Activated CD4-positive, alpha-beta memory T cell treated with anti-CD3 and anti-CD28 coated beads for 36 hours (primary cell): ENCODE measurements at regions of chr1 and their contacts with region 1.

Region 1: GRCh38 chr1:23577056-23578004 is 18.0 kb upstream of the ID3 start:
- DNase-seq: peak; percentile 71
- H3K4me3 Mint-ChIP-seq: peak overlapping the region; percentile 4
- H3K27ac Mint-ChIP-seq: peak overlapping the region; percentile 55
- H3K4me1 Mint-ChIP-seq: peaks cover 27% of the 10 kb centered on the region
- H3K27me3 Mint-ChIP-seq: no peaks in the 10 kb centered on the region

Region 2: DNA sequence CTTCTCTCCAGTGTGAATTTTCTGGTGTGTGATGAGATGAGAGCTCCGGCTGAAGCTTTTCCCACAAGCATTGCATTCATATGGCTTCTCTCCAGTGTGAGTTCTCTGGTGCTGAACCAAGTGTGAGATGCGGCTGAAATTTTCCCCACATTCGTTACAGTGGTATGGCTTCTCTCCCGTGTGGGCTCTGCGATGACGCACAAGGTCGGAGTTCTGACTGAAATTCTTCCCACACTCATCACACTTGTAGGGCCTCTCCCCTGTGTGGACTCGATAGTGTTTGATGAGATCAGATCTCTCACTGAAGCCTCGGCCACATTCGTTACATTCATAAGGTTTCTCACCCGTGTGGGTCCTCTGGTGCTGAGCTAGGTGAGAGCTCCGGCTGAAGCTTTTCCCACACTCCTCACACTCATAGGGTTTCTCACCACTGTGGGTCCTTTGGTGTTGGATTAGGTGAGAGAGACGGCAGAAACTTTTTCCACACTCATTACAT is 215.1 kb before region 1 on chr1:
- CTCF ChIA-PET with region 1: no interaction called
- POLR2A ChIA-PET with region 1: no interaction called
- intact Hi-C with region 1: no loop called
- DNase-seq: peak; percentile 9
- H3K4me3 Mint-ChIP-seq: no peak overlapping the region
- H3K27ac Mint-ChIP-seq: no peak overlapping the region
- H3K4me1 Mint-ChIP-seq: peaks cover 14% of the 10 kb centered on the region
- H3K27me3 Mint-ChIP-seq: no peaks in the 10 kb centered on the region

Region 3: DNA sequence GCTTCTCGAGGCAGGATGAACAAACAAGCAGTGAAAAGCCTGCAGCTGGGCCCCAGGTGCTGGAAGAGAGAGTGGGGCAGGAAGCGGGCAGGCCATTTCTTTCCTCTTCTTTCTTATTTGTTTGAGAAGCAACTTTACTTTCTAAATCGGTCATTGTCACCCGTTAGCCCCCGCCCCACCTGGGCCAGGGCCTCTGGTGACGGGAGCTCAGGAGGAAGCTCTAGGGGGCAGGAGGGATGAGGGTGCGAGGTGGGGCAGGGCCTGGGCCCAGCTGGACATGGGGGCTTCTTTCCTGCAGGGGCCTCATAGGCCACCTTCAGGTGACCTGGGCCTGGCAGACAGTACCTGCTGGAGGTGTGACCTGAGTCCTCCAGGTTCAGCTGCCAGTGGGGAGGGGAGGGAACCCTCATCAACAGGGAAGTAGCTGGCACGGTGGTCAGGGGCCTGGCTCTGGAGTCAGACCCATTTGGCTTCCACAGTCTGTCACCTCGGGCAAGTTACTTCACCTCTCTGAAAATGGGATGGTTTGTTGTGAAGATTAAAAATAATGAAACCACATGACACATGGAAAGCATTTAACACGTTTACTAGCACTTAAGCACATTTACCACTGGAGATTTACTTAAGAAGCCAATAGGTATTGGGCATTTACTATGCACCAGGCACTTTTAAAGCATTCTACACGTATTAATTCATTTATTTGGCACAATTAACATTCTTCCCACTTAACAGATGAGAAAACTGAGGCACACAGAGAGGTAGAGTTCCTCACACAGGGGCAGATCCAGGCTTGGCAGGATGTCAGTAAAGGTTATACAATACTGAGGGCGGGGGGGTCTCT is 36.1 kb after region 1 on chr1:
- CTCF ChIA-PET with region 1: no interaction called
- POLR2A ChIA-PET with region 1: interaction called, 3 read pairs
- intact Hi-C with region 1: loop called (anchors 1 kb)
- DNase-seq: peak; percentile 86
- H3K4me3 Mint-ChIP-seq: peak overlapping the region; percentile 17
- H3K27ac Mint-ChIP-seq: peak overlapping the region; percentile 77
- H3K4me1 Mint-ChIP-seq: peaks cover 72% of the 10 kb centered on the region
- H3K27me3 Mint-ChIP-seq: no peaks in the 10 kb centered on the region

Region 4: DNA sequence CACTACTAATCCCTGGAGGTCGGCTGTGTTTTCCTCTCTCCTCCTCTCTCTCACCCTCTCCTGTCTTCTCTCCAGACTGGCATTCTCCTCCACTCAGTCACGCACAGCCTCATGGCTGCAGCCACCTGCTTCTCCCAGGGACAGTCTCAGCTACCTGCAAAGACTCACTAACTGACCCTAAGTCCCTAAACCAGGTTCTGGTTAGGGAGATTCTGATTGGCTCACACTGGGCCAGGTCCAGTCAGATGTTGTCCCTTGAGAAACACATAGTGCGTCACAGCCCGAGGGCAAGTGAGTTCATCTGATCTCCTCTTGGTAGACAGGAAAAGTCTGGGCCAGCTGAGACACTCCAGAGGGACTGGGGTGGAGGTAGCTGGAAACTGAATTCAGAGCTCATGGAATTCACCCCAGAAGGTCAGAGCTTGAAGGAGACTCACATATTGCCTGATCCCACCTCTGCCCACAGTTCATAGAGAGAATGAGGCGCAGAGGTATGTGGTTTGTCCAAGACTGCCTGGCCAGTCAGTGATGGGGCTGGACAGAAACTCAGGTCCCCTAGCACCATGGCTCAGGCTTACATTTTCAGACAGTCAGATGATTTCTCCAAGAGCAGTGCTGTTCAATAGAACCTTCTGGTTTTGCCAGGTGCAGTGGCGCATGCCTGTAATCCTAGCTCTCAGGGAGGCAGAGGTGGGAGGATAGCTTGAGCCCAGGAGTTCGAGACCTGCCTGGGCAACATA is 73.9 kb after region 1 on chr1:
- CTCF ChIA-PET with region 1: no interaction called
- POLR2A ChIA-PET with region 1: no interaction called
- intact Hi-C with region 1: no loop called
- DNase-seq: no peak
- H3K4me3 Mint-ChIP-seq: no peak overlapping the region
- H3K27ac Mint-ChIP-seq: no peak overlapping the region
- H3K4me1 Mint-ChIP-seq: no peaks in the 10 kb centered on the region
- H3K27me3 Mint-ChIP-seq: peaks cover 6% of the 10 kb centered on the region